RWPE1 (cell line): ENCODE measurements at regions of chr12 and their contacts with region 1.

Region 1: GRCh38 chr12:30985814-30986452 is 59.4 kb downstream of the TSPAN11 start:
- DNase-seq: peak; percentile 66
- H3K27ac ChIP-seq: no peak overlapping the region
- CTCF ChIP-seq: peak; percentile 52

Region 2: GRCh38 chr12:30847259-30847658 is 138.7 kb before region 1 on chr12:
- CTCF ChIA-PET with region 1: interaction called, 28 read pairs
- POLR2A ChIA-PET with region 1: no interaction called
- DNase-seq: no peak
- H3K27ac ChIP-seq: no peak overlapping the region
- CTCF ChIP-seq: peak; percentile 78

Region 3: GRCh38 chr12:30858471-30858870 is 127.5 kb before region 1 on chr12:
- CTCF ChIA-PET with region 1: no interaction called
- POLR2A ChIA-PET with region 1: no interaction called
- DNase-seq: no peak
- H3K27ac ChIP-seq: no peak overlapping the region
- CTCF ChIP-seq: no peak

Region 4: GRCh38 chr12:30959110-30959710 is 26.7 kb before region 1 on chr12:
- CTCF ChIA-PET with region 1: no interaction called
- POLR2A ChIA-PET with region 1: no interaction called
- DNase-seq: no peak
- H3K27ac ChIP-seq: no peak overlapping the region
- CTCF ChIP-seq: no peak

Region 5: DNA sequence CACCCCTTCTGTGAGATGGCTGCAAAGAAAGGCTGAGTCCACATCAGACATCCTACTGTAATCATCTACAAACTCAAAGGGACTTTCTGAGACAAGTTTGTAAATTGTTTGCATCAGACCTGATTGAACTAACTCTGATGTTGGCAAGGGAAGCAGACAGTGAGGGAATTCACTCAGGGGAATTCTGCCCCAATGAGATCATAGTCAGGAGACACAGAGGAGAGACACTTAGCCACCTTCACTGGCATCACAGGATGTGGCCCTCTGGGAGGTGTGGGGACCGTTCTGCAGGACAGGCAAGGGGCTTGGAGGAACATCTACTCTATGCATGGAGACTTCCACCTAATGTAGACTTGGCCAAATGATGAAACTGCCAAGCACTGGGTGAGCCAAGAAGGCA is 17.1 kb after region 1 on chr12:
- CTCF ChIA-PET with region 1: no interaction called
- POLR2A ChIA-PET with region 1: no interaction called
- DNase-seq: no peak
- H3K27ac ChIP-seq: no peak overlapping the region
- CTCF ChIP-seq: no peak

Region 6: DNA sequence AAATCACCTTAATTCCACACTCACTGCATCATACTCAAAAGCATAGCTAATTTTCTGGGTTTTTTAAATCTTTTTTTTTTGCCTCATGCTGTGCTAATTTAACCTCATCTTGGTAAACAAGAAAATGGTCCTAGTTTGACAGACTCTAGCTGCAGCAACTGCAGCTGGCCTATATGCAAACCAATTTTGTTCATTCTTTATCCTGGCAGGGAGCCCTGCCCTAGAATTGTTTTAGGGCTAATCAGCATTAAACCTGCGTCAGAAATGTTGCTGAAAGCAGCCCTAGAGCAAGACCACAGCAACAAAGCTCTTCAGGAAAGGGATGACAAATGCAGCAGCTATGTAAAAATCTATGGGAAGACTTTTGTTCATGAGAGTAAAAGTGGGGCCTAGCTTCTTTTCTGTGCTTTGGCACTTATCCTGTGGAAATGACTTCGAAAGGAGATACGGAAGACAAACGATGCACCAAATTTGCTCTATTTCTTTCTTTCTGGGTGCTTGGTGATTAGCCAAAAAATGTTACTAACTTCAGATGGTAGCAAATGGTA is 532.8 kb after region 1 on chr12:
- CTCF ChIA-PET with region 1: no interaction called
- POLR2A ChIA-PET with region 1: no interaction called
- DNase-seq: peak; percentile 85
- H3K27ac ChIP-seq: no peak overlapping the region
- CTCF ChIP-seq: no peak